Tibial artery (tissue), 4 donors: ENCODE measurements at regions of chr6 and their contacts with region 1.

Region 1: DNA sequence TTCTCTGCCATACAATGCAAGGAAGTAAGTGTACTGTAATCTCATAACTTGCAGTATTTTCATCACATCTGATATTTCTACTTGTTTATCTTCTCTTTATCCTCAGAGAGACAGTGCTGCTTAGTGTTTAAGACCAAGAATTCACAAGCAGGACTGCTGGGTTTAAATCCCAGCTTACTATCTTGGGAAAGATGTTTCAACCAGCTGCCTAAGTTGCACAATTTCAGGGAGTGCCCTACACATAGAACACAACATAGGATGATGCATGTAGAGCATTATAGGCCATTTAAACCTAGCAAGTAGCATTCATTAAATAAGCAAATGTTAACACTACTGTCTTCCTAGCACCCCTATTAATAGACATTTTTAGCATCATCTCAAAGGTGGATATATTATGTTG is 205.2 kb upstream of the CEP162 start:
- DNase-seq: no peak
- H3K4me3 ChIP-seq: no peak overlapping the region
- H3K27ac ChIP-seq: no peak overlapping the region
- H3K4me1 ChIP-seq: peaks cover 0 to 5% (median 0%) of the 10 kb centered on the region in 4 donors
- H3K27me3 ChIP-seq: no peaks in the 10 kb centered on the region
- CTCF ChIP-seq: no peak

Region 2: DNA sequence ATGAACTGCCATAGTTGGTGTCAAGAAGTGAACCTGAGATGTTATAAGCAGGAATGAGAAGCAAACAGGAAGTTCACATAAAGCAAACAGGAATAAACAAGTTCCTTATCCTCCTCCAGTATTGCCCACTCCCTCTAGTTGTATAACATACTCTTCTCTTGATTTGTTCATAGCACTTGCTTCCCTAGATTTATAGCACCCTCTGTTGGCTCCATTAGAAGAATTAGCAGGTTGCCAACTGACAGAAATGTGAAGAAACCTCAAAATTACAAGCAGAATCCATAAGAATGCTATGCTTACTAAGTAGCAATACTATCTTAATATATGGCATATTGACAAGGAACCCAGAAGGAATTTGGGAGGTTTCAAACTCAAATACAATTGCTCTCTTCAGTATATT is 136.4 kb after region 1 on chr6:
- intact Hi-C with region 1: loop called (anchors 5 kb)
- DNase-seq: no peak
- H3K4me3 ChIP-seq: no peak overlapping the region
- H3K27ac ChIP-seq: no peak overlapping the region
- H3K4me1 ChIP-seq: no peaks in the 10 kb centered on the region
- H3K27me3 ChIP-seq: no peaks in the 10 kb centered on the region
- CTCF ChIP-seq: peak; percentile 33